Heart right ventricle (tissue), 16 donors: ENCODE measurements at regions of chr17 and their contacts with region 1.

Region 1: GRCh38 chr17:50478391-50479381 is at the start of gene RSAD1:
- DNase-seq: peak; percentile 84 to 88
- ATAC-seq: peak; percentile 82 to 93 (median 90)
- H3K4me3 ChIP-seq: peak within 1 kb of the TSS; percentile 52 to 89 (median 80)
- H3K27ac ChIP-seq: peak within 1 kb of the TSS; percentile 74 to 96 (median 91)
- H3K4me1 ChIP-seq: peaks cover 2 to 48% (median 34%) of the 10 kb centered on the region in 9 donors
- H3K27me3 ChIP-seq: peaks cover 0 to 6% (median 0%) of the 10 kb centered on the region in 7 donors
- CTCF ChIP-seq: peak; percentile 75 to 97 (median 94)
- total RNA-seq, gene RSAD1: 36.2 to 52.3 (median 45.5) TPM

Region 2: GRCh38 chr17:50397111-50397918 is 81.4 kb before region 1 on chr17 and contains the start of gene LRRC59:
- intact Hi-C with region 1: loop called in 1 of 10 experiments (anchors 1 kb)
- DNase-seq: peak; percentile 88 to 92
- ATAC-seq: peak; percentile 97 to 98 (median 98)
- H3K4me3 ChIP-seq: peak within 1 kb of the TSS; percentile 67 to 100 (median 90)
- H3K27ac ChIP-seq: peak within 1 kb of the TSS in 9 of 10 donors; percentile 54 to 91 (median 88)
- H3K4me1 ChIP-seq: peaks cover 2 to 32% (median 22%) of the 10 kb centered on the region in 9 donors
- H3K27me3 ChIP-seq: no peaks in the 10 kb centered on the region
- CTCF ChIP-seq: peak; percentile 90 to 100 (median 99)
- total RNA-seq, gene LRRC59: 19.2 to 48.3 (median 24.7) TPM

Region 3: DNA sequence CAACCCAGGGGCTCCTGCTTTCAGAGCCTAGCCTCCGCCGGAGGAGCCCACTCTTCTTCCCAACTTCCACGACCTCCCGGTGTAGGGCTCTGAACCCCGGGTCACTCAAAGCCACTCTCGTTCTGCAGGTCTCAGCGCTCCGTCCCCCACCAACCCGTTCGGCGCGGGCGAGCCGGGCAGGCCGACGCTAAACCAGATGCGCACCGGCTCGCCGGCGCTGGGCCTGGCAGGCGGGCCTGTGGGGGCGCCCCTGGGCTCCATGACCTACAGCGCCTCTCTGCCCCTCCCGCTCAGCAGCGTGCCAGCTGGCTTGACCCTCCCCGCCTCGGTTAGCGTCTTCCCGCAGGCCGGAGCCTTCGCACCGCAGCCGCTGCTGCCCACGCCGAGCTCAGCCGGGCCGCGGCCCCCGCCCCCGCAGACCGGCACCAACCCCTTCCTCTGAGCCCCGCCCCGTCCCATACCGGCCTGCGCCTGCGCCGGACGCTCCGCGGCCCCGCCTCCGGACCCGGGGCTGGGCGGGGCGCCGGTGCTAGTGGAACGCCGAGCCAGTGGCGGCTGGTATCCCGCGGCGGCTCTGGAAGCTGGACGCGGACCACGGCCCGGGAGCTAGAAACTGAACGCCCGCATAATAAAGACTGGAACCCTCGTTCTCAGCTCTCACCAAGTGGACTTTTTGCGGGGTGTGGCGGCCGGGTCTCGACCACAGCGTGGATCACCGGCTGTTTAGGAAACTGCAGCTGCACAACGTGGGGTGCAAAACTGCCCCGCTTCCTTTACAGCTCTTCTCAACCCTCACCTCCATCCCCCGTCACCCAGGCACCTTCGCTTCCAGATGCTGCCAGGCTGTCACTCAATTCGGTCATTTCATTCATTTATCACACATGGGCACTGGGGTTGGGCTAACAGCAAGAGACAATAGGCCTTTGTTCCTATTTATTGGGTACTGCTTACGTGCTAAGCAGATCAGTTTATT is 63.3 kb after region 1 on chr17:
- intact Hi-C with region 1: loop called in 9 of 10 experiments (anchors 2 to 10 kb)
- DNase-seq: peak; percentile 84 to 92
- ATAC-seq: peak; percentile 88 to 94 (median 91)
- H3K4me3 ChIP-seq: peak overlapping the region; percentile 38 to 87 (median 61)
- H3K27ac ChIP-seq: peak overlapping the region in 9 of 10 donors; percentile 50 to 88 (median 75)
- H3K4me1 ChIP-seq: peaks cover 2 to 29% (median 23%) of the 10 kb centered on the region in 9 donors
- H3K27me3 ChIP-seq: no peaks in the 10 kb centered on the region
- CTCF ChIP-seq: peak in 5 of 9 donors; percentile 18 to 45 (median 36)

Region 4: GRCh38 chr17:50626037-50626574 is 147.4 kb after region 1 on chr17:
- intact Hi-C with region 1: loop called in 6 of 10 experiments (anchors 5 to 10 kb)
- DNase-seq: peak; percentile 76
- ATAC-seq: peak; percentile 73 to 88 (median 84)
- H3K4me3 ChIP-seq: no peak overlapping the region
- H3K27ac ChIP-seq: no peak overlapping the region
- H3K4me1 ChIP-seq: peaks cover 0 to 9% (median 7%) of the 10 kb centered on the region in 9 donors
- H3K27me3 ChIP-seq: peaks cover 0 to 53% (median 46%) of the 10 kb centered on the region in 7 donors
- CTCF ChIP-seq: peak; percentile 67 to 88 (median 83)

Region 5: GRCh38 chr17:50686494-50687199 is 208.0 kb after region 1 on chr17:
- intact Hi-C with region 1: loop called in 4 of 10 experiments (anchors 10 kb)
- DNase-seq: peak in 1 of 2 donors; percentile 34
- ATAC-seq: peak; percentile 21 to 91 (median 77)
- H3K4me3 ChIP-seq: no peak overlapping the region
- H3K27ac ChIP-seq: peak overlapping the region in 7 of 10 donors; percentile 39 to 65 (median 56)
- H3K4me1 ChIP-seq: peaks cover 2 to 36% (median 13%) of the 10 kb centered on the region in 9 donors
- H3K27me3 ChIP-seq: no peaks in the 10 kb centered on the region
- CTCF ChIP-seq: no peak